Activated CD4-positive, alpha-beta memory T cell treated with anti-CD3 and anti-CD28 coated beads, Interleukin-2, amount 10 ng/mL, durations not matched to agents 7 days and 5 days (primary cell): ENCODE measurements at regions of chr5 and their contacts with region 1.

Region 1: DNA sequence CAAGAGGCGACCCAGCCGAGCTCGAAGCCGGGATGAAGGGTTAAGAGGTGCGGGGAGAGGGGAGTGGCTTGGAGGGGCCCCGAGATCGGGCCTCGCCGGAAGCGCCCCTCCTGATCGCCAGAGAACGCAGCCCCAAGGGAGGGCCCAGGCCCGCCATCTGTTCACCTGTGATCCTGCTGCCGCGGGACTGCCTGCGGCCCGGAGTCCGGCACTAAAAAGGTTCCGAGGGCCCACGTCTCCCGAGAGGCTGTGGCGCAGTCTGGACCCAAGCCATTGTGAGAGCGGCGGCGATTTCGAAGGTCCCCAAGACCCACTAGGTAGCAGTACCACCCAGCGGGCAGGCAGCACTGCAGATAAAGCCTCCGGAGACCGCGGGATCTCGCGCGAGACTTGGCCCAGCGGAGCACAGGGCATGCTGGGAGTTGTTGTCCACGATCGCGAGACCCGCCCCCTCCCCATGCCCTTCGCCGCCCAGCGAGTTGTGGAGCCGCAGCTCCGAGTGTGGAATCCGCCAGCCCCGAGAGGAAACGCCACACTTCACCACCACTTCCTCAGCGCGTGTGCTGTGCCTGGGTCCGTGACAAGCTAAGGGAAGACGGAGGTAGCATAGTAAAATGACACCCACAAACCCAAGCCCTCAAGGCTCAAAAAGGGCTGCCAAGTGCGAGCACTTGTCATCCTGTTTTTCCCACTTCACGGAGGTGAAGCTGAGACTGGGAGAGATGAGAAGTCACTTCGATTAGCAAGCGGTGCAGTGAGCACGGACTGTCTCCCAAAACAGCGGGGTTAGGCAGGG is at the start of gene KIAA1191:
- DNase-seq: peak; percentile 97
- H3K4me3 Mint-ChIP-seq: peak within 1 kb of the TSS; percentile 97
- H3K27ac Mint-ChIP-seq: peak within 1 kb of the TSS; percentile 92
- H3K4me1 Mint-ChIP-seq: peaks cover 42% of the 10 kb centered on the region
- H3K27me3 Mint-ChIP-seq: no peaks in the 10 kb centered on the region
- total RNA-seq, gene KIAA1191: 50.5 to 54.5 TPM

Region 2: DNA sequence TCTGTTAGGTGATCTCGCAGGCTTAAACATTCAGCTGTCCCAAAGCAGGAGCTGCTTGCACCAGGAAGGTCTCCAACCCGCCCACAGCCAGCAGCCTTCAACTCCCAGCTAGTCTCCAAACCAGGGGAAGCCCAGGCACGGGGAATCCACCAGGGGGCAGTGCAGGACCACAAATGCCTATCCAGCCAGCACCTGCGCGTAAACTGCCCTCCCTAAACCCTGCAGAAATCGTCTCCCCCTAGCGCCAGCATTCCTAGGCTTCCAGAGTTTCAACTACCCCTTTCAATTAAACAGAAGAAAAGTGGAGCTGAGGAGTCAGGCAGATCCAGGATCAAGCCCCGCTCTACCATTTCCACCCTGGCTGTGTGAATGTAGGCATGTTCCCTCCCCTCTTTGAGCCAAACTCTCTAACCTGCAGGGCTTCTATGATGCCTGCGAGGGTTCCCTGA is 631.8 kb before region 1 on chr5:
- CTCF ChIA-PET with region 1: interaction called, 10 read pairs
- POLR2A ChIA-PET with region 1: no interaction called
- DNase-seq: peak; percentile 91
- H3K4me3 Mint-ChIP-seq: no peak overlapping the region
- H3K27ac Mint-ChIP-seq: no peak overlapping the region
- H3K4me1 Mint-ChIP-seq: peaks cover 3% of the 10 kb centered on the region
- H3K27me3 Mint-ChIP-seq: peaks cover 10% of the 10 kb centered on the region

Region 3: GRCh38 chr5:176388444-176389134 is 27.0 kb after region 1 on chr5 and contains the starts of genes HIGD2A and NOP16:
- CTCF ChIA-PET with region 1: interaction called, 8 read pairs
- POLR2A ChIA-PET with region 1: interaction called, 62 read pairs
- DNase-seq: peak; percentile 99
- H3K4me3 Mint-ChIP-seq: peak within 1 kb of the TSS; percentile 95
- H3K27ac Mint-ChIP-seq: peak within 1 kb of the TSS; percentile 99
- H3K4me1 Mint-ChIP-seq: peaks cover 31% of the 10 kb centered on the region
- H3K27me3 Mint-ChIP-seq: no peaks in the 10 kb centered on the region
- total RNA-seq, gene HIGD2A: 142 to 147 TPM
- total RNA-seq, gene NOP16: 24.2 to 24.7 TPM